Sigmoid colon (tissue), 7 donors: ENCODE measurements at regions of chr21 and their contacts with region 1.

Region 1: DNA sequence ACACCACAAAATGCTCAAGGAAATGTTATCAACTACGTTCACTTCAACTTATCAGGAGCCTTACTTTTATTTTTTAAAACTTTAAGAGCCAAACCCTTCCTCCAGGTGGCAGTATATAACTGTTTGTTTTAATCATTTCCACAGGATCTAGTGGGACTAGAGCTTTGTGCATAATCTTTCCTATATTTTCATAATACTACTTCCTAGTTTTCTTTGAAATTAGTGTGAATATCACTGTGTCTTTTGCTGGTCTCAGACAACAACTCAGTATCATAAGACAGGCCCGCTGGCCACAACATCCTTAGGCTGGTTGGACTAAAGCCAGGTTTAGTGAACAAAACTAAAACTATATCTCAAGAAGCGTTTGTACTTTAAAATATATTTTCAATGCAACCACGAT is 145.5 kb downstream of the TIAM1 start:
- DNase-seq: no peak
- H3K4me3 ChIP-seq: no peak overlapping the region
- H3K27ac ChIP-seq: no peak overlapping the region
- H3K4me1 ChIP-seq: no peaks in the 10 kb centered on the region
- H3K27me3 ChIP-seq: no peaks in the 10 kb centered on the region
- CTCF ChIP-seq: peak; percentile 11 to 59 (median 42)
- EP300 ChIP-seq: no peak
- POLR2A ChIP-seq: no peak

Region 2: GRCh38 chr21:31142600-31142999 is 56.0 kb before region 1 on chr21:
- intact Hi-C with region 1: no loop called
- DNase-seq: no peak
- H3K4me3 ChIP-seq: no peak overlapping the region
- H3K27ac ChIP-seq: peak overlapping the region in 1 of 4 donors; percentile 19
- H3K4me1 ChIP-seq: no peaks in the 10 kb centered on the region
- H3K27me3 ChIP-seq: no peaks in the 10 kb centered on the region
- CTCF ChIP-seq: no peak
- EP300 ChIP-seq: no peak
- POLR2A ChIP-seq: no peak

Region 3: DNA sequence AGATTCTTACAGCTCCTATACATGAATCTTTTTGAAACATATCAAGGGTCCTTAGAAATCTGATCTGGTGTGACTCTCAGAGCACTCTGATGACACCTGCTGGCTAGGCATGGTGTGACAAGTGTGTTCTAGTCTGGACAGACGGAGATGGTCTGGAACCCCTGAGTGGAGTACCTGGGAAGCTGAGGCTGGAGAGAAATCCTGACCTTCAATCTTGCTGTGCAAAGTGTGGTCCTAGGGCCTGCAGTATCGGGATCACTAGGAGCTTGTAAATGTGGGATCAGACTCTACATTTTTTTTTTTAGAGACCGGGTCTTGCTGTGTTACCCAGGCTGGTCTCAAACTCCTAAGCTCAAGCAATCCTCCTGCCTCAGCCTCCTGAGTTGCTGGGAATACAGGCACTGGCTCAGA is 382.3 kb after region 1 on chr21:
- intact Hi-C with region 1: loop called (anchors 1 kb)
- DNase-seq: peak; percentile 70
- H3K4me3 ChIP-seq: no peak overlapping the region
- H3K27ac ChIP-seq: no peak overlapping the region
- H3K4me1 ChIP-seq: no peaks in the 10 kb centered on the region
- H3K27me3 ChIP-seq: no peaks in the 10 kb centered on the region
- CTCF ChIP-seq: peak; percentile 13 to 79 (median 56)
- EP300 ChIP-seq: no peak
- POLR2A ChIP-seq: no peak